ENCODE measurements at regions of chr17 and their contacts with region 1.

Region 1: DNA sequence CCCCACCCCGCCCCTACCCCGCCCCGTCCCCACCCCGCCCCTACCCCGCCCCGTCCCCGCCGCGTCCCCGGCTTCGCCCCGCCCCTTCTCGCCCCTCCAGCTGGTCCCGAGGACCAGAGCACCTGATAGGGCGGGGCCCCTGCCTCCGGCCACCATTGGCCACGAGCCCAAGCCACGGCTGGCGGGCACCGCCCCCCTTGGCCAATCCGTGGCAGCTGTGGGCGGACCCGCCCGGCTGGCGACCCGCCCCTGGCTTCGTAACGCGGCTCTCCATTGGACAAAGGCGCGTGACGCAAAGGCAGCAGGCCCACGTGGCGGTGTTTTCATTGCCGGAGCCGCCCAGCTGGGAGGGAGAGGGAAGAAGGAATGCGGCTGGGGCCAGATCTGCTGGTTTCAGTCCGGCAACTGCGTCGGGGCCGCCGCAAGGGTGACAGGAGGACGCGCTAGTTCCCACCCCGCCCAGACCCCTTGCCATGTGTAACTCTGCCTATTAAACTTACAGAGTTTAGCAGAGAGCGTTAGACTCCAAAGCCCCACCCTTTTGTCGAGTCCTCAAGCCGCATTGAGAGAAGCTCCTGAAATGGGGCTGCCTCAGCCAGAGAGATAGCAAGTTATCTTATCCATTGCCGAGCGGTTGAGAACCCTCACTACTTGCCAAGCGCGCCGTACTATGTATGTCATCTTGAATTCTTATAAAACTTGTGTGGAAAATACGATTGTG is 403 bp upstream of the WIPI1 start:
- DNase-seq: peak; percentile 97 to 99 (median 99)
- ATAC-seq: peak; percentile 90
- H3K4me3 ChIP-seq: peak overlapping the region; percentile 85 to 88
- H3K27ac ChIP-seq: peak overlapping the region; percentile 86 to 91
- H3K4me1 ChIP-seq: peaks cover 9 to 68% of the 10 kb centered on the region in 2 donors
- H3K27me3 ChIP-seq: no peaks in the 10 kb centered on the region
- CTCF ChIP-seq: no peak

Region 2: DNA sequence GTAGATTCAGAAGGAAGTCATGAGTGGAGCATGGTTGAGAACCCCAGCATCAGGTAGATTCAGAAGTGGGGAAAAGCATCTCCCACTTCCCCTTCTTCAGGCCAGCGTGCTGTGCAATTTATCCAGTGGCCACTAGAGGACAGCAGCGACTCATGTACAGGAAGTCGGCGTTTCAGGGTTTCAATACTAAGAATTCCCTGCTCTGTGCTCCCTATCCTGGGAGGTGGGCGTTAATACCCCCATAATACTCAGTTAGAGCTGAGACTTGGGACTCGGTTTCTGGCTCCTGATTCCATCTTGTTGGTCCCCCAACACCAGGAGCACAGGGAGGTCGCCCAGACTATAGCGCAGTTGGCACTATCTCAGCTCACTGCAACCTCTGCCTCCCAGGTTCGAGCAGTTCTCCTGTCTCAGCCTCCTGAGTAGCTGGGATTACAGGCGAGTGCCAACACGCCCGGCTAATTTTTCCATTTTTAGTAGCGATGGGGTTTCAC is 285.2 kb before region 1 on chr17:
- intact Hi-C with region 1: loop called in 1 of 2 experiments (anchors 10 kb)
- DNase-seq: peak; percentile 42 to 83 (median 67)
- ATAC-seq: peak; percentile 95
- H3K4me3 ChIP-seq: no peak overlapping the region
- H3K27ac ChIP-seq: no peak overlapping the region
- H3K4me1 ChIP-seq: no peaks in the 10 kb centered on the region
- H3K27me3 ChIP-seq: no peaks in the 10 kb centered on the region
- CTCF ChIP-seq: peak; percentile 94 to 99

Region 3: GRCh38 chr17:68247445-68248198 is 210.1 kb before region 1 on chr17 and contains the start of gene AMZ2:
- intact Hi-C with region 1: loop called in 1 of 2 experiments (anchors 10 kb)
- DNase-seq: peak; percentile 95 to 98 (median 98)
- ATAC-seq: peak; percentile 99
- H3K4me3 ChIP-seq: peak within 1 kb of the TSS; percentile 88 to 90
- H3K27ac ChIP-seq: peak within 1 kb of the TSS; percentile 94 to 97
- H3K4me1 ChIP-seq: peaks cover 10 to 24% of the 10 kb centered on the region in 2 donors
- H3K27me3 ChIP-seq: no peaks in the 10 kb centered on the region
- CTCF ChIP-seq: peak in 1 of 2 donors; percentile 21
- polyA plus RNA-seq, gene AMZ2: 67.7 to 86.1 (median 77.6) TPM

Region 4: GRCh38 chr17:68260051-68260762 is 197.5 kb before region 1 on chr17:
- intact Hi-C with region 1: loop called in 1 of 2 experiments (anchors 5 kb)
- DNase-seq: no peak
- ATAC-seq: no peak
- H3K4me3 ChIP-seq: no peak overlapping the region
- H3K27ac ChIP-seq: no peak overlapping the region
- H3K4me1 ChIP-seq: peaks cover 3 to 43% of the 10 kb centered on the region in 2 donors
- H3K27me3 ChIP-seq: no peaks in the 10 kb centered on the region
- CTCF ChIP-seq: no peak

Measured in left lung (tissue), 14 donors.